Right ventricle myocardium inferior (tissue), 1 donor: ENCODE measurements at regions of chr14 and their contacts with region 1.

Region 1: GRCh38 chr14:104985675-104986525 is at the start of gene CLBA1:
- DNase-seq: peak; percentile 95
- ATAC-seq: peak; percentile 97
- total RNA-seq, gene CLBA1: 1.9 TPM

Region 2: DNA sequence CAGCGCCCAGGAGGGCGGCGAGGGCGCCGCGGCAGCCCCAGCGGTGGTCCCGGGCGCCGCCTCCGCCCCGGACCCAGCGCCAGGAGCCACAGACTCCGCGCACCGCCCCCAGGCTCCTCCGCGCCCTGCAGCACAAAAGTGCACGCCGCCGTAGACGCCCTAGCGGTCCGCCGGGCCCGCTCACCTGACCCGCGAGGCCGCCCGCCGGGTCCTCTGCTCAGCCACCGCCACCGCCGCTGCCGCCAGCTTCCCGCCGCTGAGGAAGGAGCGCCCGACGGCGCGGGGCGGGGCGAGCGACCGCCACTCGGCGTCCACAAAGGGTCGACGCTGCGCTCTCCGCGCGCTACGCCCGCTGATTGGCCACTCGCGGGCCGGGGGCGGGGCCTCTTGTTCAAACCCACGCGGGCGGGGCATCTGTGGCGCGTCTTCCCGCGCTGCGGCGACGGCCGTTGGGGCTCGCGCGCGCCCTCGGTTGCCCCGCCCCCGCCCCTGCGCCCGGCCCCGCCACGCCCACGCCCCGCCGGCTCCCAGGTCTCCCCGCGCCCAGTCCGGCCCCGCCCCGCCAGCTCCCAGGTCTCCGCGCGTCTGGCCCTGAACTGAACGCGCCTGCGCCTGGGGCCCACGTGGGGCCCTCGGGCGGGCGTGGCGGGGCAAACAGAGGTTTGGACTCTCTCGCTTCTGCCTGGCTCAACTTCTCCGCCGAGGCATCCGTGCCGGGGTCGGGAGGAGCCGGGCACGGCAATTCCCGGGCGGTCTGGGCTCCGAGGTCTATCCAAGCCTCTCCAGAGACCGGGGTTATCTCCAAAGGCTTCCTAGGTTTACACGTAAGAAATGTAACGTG is 35.1 kb after region 1 on chr14 and contains the start of gene CDCA4:
- intact Hi-C with region 1: loop called (anchors 1 kb)
- DNase-seq: peak; percentile 99
- ATAC-seq: peak; percentile 99
- total RNA-seq, gene CDCA4: 3.1 TPM